Left cardiac atrium (tissue), 4 donors: ENCODE measurements at regions of chr1 and their contacts with region 1.

Region 1: GRCh38 chr1:182601416-182601786 is 2.8 kb downstream of the RGS16 start:
- DNase-seq: peak; percentile 55
- ATAC-seq: peak in 1 of 2 donors; percentile 21

Region 2: GRCh38 chr1:182556279-182556678 is 45.1 kb before region 1 on chr1:
- intact Hi-C with region 1: no loop called
- DNase-seq: no peak
- ATAC-seq: no peak

Region 3: GRCh38 chr1:182781841-182782586 is 180.6 kb after region 1 on chr1:
- intact Hi-C with region 1: loop called (anchors 1 to 2 kb)
- DNase-seq: peak; percentile 68
- ATAC-seq: peak; percentile 74 to 78

Region 4: DNA sequence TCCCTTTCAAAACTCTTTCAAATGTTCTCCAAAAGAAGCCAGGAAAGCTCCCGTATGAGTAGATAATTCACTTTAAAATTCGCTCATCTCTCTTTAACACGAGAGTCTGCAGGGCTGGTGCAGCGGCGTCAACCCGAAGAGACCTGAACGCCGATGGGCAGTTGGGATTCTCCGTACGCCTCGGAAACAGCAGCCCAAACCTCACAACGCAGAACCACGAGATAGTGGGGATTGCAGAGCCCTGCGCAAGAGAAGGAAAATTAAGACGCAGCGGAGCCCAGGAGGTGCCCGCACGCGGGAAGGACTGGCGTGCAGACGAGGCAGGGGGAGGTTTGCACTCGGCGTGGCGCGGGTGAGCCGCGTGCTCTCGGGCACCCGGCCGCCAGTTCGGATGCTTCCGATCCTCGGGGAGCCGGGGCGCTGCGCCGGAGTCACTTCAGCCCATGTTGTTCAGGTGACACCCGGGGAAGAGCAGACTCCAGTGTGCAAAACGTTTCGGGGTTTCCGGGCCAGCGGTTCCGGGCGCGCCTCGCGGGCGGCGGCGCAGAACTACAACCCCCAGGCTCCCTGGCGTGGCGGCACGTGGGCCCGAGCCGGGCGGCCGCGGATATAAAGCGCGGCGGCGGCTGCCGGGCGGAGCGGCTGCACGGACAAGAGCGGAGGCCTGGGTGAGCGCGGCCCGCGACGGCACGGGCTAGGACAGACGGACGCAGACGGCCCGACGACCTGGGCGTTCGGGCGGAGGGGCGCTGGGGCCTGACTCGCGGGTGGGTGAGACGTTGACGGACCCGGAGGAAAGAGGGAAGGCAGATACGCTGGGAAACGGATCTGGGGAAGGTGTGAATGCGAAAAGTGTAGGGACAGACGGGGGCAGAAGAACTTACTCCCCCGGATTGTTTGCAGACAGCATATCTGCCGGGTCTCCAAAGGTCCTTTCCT is 188.0 kb after region 1 on chr1 and contains the start of gene NPL:
- intact Hi-C with region 1: loop called in 1 of 2 experiments (anchors 1 kb)
- DNase-seq: peak; percentile 88
- ATAC-seq: peak; percentile 98 to 99
- total RNA-seq, gene NPL: 6.7 to 16.7 TPM